ENCODE measurements at regions of chr12 and their contacts with region 1.

Region 1: DNA sequence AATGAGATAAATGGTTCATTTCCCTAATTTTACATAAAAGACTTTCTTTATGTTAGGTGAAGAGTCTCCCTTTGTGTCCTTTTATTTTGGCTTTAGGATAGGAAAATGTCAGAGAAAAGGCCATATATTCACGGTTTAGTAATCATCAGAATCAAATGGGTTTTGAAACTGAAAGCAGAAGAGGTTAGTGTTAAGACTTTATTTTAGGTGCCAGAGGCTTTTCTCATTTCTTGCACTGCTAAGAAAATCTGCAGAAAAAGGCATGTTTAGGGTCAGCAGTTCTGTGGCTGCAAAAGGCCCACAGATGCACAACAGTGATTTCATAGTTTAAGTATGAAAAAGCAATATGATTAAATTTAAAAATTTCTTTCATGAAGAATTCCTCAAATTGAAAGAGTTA is 80.4 kb upstream of the SINHCAF start:
- DNase-seq: peak; percentile 65
- ATAC-seq: peak; percentile 77
- H3K4me3 ChIP-seq: peak overlapping the region; percentile 15
- H3K27ac ChIP-seq: peak overlapping the region; percentile 85
- H3K4me1 ChIP-seq: peaks cover 40% of the 10 kb centered on the region
- H3K27me3 ChIP-seq: no peaks in the 10 kb centered on the region
- CTCF ChIP-seq: no peak
- EP300 ChIP-seq: peak in 1 of 2 experiments; percentile 36; a peak in 1 of 4 replicates
- POLR2A ChIP-seq: no peak
- RAD21 ChIP-seq: peak; percentile 31

Region 2: GRCh38 chr12:31029916-31030562 is 376.3 kb before region 1 on chr12:
- CTCF ChIA-PET with region 1: no interaction called
- POLR2A ChIA-PET with region 1: no interaction called
- RAD21 ChIA-PET with region 1: no interaction called
- SMC1A ChIA-PET with region 1: no interaction called
- in situ Hi-C with region 1: no loop called
- intact Hi-C with region 1: no loop called
- DNase-seq: no peak
- ATAC-seq: no peak
- H3K4me3 ChIP-seq: no peak overlapping the region
- H3K27ac ChIP-seq: no peak overlapping the region
- H3K4me1 ChIP-seq: no peaks in the 10 kb centered on the region
- H3K27me3 ChIP-seq: peaks cover 0 to 3% of the 10 kb centered on the region in 2 experiments; a peak in 1 of 4 replicates
- CTCF ChIP-seq: no peak
- EP300 ChIP-seq: no peak
- POLR2A ChIP-seq: no peak
- RAD21 ChIP-seq: no peak

Region 3: GRCh38 chr12:31245822-31246469 is 160.4 kb before region 1 on chr12:
- CTCF ChIA-PET with region 1: interaction called, 11 read pairs
- POLR2A ChIA-PET with region 1: no interaction called
- RAD21 ChIA-PET with region 1: no interaction called
- SMC1A ChIA-PET with region 1: interaction called, 18 read pairs
- in situ Hi-C with region 1: no loop called
- intact Hi-C with region 1: no loop called
- DNase-seq: no peak
- ATAC-seq: peak; percentile 60
- H3K4me3 ChIP-seq: no peak overlapping the region
- H3K27ac ChIP-seq: no peak overlapping the region
- H3K4me1 ChIP-seq: no peaks in the 10 kb centered on the region
- H3K27me3 ChIP-seq: no peaks in the 10 kb centered on the region
- CTCF ChIP-seq: peak in 2 of 3 experiments; percentile 22 to 32; a peak in 3 of 6 replicates
- EP300 ChIP-seq: no peak
- POLR2A ChIP-seq: no peak
- RAD21 ChIP-seq: no peak

Region 4: GRCh38 chr12:31466768-31467167 is 60.4 kb after region 1 on chr12:
- CTCF ChIA-PET with region 1: no interaction called
- POLR2A ChIA-PET with region 1: no interaction called
- RAD21 ChIA-PET with region 1: no interaction called
- SMC1A ChIA-PET with region 1: no interaction called
- in situ Hi-C with region 1: no loop called
- intact Hi-C with region 1: loop called (anchors 5 kb)
- DNase-seq: no peak
- ATAC-seq: no peak
- H3K4me3 ChIP-seq: no peak overlapping the region
- H3K27ac ChIP-seq: no peak overlapping the region
- H3K4me1 ChIP-seq: no peaks in the 10 kb centered on the region; the same call in 1 of the 2 replicates
- H3K27me3 ChIP-seq: no peaks in the 10 kb centered on the region
- CTCF ChIP-seq: no peak
- EP300 ChIP-seq: no peak
- POLR2A ChIP-seq: no peak
- RAD21 ChIP-seq: no peak

Region 5: GRCh38 chr12:31491819-31492598 is 85.7 kb after region 1 on chr12:
- CTCF ChIA-PET with region 1: no interaction called
- POLR2A ChIA-PET with region 1: no interaction called
- RAD21 ChIA-PET with region 1: no interaction called
- SMC1A ChIA-PET with region 1: no interaction called
- in situ Hi-C with region 1: no loop called
- intact Hi-C with region 1: no loop called
- DNase-seq: no peak
- ATAC-seq: no peak
- H3K4me3 ChIP-seq: no peak overlapping the region
- H3K27ac ChIP-seq: no peak overlapping the region
- H3K4me1 ChIP-seq: no peaks in the 10 kb centered on the region
- H3K27me3 ChIP-seq: no peaks in the 10 kb centered on the region
- CTCF ChIP-seq: no peak
- EP300 ChIP-seq: no peak
- POLR2A ChIP-seq: no peak
- RAD21 ChIP-seq: no peak

Region 6: GRCh38 chr12:31629756-31630732 is 223.7 kb after region 1 on chr12:
- CTCF ChIA-PET with region 1: interaction called, 54 read pairs
- POLR2A ChIA-PET with region 1: no interaction called
- RAD21 ChIA-PET with region 1: interaction called, 21 read pairs
- SMC1A ChIA-PET with region 1: interaction called, 31 read pairs
- in situ Hi-C with region 1: loop called (anchors 5 kb)
- intact Hi-C with region 1: no loop called
- DNase-seq: no peak
- ATAC-seq: no peak
- H3K4me3 ChIP-seq: no peak overlapping the region
- H3K27ac ChIP-seq: no peak overlapping the region
- H3K4me1 ChIP-seq: peaks cover 8% of the 10 kb centered on the region; the same call in 1 of the 2 replicates
- H3K27me3 ChIP-seq: no peaks in the 10 kb centered on the region
- CTCF ChIP-seq: no peak
- EP300 ChIP-seq: no peak
- POLR2A ChIP-seq: no peak
- RAD21 ChIP-seq: no peak

Region 7: DNA sequence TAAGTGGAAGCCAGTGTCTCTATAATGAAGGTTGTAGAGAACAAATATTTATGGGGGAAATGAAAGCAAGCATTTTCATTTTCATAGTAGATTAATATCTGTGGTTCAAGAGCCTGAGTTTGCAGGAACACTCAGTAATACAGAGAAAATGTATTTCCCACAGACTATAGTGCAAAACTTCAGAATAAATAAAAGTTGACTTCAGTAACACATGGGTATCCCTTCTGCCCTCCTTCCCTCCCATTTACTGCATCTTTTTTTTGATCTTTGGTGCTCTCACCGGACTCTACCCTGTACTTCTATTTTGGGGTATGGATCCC is 397.8 kb after region 1 on chr12:
- CTCF ChIA-PET with region 1: no interaction called
- POLR2A ChIA-PET with region 1: no interaction called
- RAD21 ChIA-PET with region 1: no interaction called
- SMC1A ChIA-PET with region 1: no interaction called
- in situ Hi-C with region 1: no loop called
- intact Hi-C with region 1: loop called (anchors 10 kb)
- DNase-seq: no peak
- ATAC-seq: peak; percentile 40
- H3K4me3 ChIP-seq: no peak overlapping the region
- H3K27ac ChIP-seq: peak overlapping the region; percentile 57
- H3K4me1 ChIP-seq: peaks cover 24% of the 10 kb centered on the region
- H3K27me3 ChIP-seq: no peaks in the 10 kb centered on the region
- CTCF ChIP-seq: no peak
- EP300 ChIP-seq: peak in 1 of 2 experiments; percentile 50; a peak in 1 of 4 replicates
- POLR2A ChIP-seq: no peak
- RAD21 ChIP-seq: 0 out of 2 replicates have a peak, but pooled peaks have one; percentile 1

Region 8: GRCh38 chr12:32312049-32312670 is 905.8 kb after region 1 on chr12:
- CTCF ChIA-PET with region 1: interaction called, 6 read pairs
- POLR2A ChIA-PET with region 1: interaction called, 6 read pairs
- RAD21 ChIA-PET with region 1: interaction called, 15 read pairs
- SMC1A ChIA-PET with region 1: interaction called, 5 read pairs
- in situ Hi-C with region 1: loop called (anchors 10 kb)
- intact Hi-C with region 1: no loop called
- DNase-seq: peak; percentile 21
- ATAC-seq: peak; percentile 77
- H3K4me3 ChIP-seq: no peak overlapping the region
- H3K27ac ChIP-seq: no peak overlapping the region
- H3K4me1 ChIP-seq: no peaks in the 10 kb centered on the region
- H3K27me3 ChIP-seq: no peaks in the 10 kb centered on the region
- CTCF ChIP-seq: peak; percentile 39 to 63 (median 56); a peak in 5 of 6 replicates
- EP300 ChIP-seq: no peak
- POLR2A ChIP-seq: no peak
- RAD21 ChIP-seq: peak; percentile 62